Activated CD4-positive, alpha-beta T cell treated with anti-CD3 and anti-CD28 coated beads for 36 hours (primary cell): ENCODE measurements at regions of chr2 and their contacts with region 1.

Region 1: GRCh38 chr2:24971536-24972314 is at the start of gene DNAJC27:
- DNase-seq: peak; percentile 99
- ATAC-seq: peak; percentile 91
- H3K4me3 Mint-ChIP-seq: peak within 1 kb of the TSS; percentile 86
- H3K27ac Mint-ChIP-seq: peak within 1 kb of the TSS; percentile 99
- H3K4me1 Mint-ChIP-seq: peaks cover 17% of the 10 kb centered on the region
- H3K27me3 Mint-ChIP-seq: no peaks in the 10 kb centered on the region
- total RNA-seq, gene DNAJC27: 5.9 to 6.6 TPM

Region 2: DNA sequence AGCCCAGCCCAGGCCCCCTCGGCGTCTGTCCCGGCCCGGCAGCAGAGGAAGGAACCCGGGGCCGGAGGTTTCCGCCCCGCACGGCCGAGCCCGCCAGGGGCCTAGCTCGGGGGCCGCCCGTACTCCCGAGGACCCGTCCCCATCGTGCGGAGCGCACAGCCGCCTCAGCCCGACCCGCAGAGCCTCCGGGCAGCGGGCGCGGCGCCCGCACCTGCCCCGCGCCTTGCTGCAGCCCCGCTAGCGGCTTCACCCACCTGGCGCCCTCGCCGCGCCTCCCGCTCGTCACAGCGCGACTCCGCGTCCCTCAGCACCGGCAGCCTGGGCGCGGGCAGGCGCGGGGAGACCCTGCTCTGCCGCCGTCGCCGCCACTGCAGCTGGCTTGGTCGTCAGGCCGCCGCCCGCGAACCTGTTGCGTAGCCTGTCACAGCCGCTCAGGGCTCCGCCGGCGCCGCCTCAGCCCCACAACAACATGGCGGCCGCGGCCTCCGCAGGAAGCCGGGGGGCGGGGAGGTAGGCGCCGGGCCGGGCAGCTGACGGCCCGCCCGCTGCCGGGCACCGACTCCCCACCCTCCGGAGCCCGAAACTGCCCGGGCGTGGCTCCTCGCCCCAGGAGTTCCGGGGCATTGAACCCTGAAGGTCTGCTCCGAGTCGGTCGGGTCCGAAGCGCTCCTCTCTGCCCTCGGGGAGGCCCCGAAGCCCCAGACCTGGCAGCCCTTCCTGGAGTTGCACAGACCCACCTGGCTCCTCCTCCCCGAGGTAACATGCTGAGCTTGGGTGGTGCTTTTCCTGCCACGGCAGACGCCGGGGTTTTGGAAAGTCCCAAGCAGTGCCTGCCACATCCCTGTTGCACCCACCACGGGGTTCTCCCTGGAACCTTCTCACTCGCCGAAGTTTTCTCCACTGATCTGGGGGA is 611.4 kb before region 1 on chr2 and contains the start of gene ITSN2:
- CTCF ChIA-PET with region 1: no interaction called
- POLR2A ChIA-PET with region 1: no interaction called
- intact Hi-C with region 1: loop called in 1 of 2 experiments (anchors 1 kb)
- DNase-seq: peak; percentile 90
- ATAC-seq: peak; percentile 89
- H3K4me3 Mint-ChIP-seq: peak within 1 kb of the TSS; percentile 84
- H3K27ac Mint-ChIP-seq: peak within 1 kb of the TSS; percentile 94
- H3K4me1 Mint-ChIP-seq: peaks cover 29% of the 10 kb centered on the region
- H3K27me3 Mint-ChIP-seq: no peaks in the 10 kb centered on the region
- total RNA-seq, gene ITSN2: 46.0 to 49.6 TPM

Region 3: GRCh38 chr2:24855726-24856125 is 116.0 kb before region 1 on chr2:
- CTCF ChIA-PET with region 1: no interaction called
- POLR2A ChIA-PET with region 1: no interaction called
- intact Hi-C with region 1: no loop called
- DNase-seq: no peak
- ATAC-seq: no peak
- H3K4me3 Mint-ChIP-seq: no peak overlapping the region
- H3K27ac Mint-ChIP-seq: no peak overlapping the region
- H3K4me1 Mint-ChIP-seq: no peaks in the 10 kb centered on the region
- H3K27me3 Mint-ChIP-seq: no peaks in the 10 kb centered on the region

Region 4: GRCh38 chr2:24920098-24920808 is 51.5 kb before region 1 on chr2 and contains the start of gene ADCY3:
- CTCF ChIA-PET with region 1: interaction called, 3 read pairs
- POLR2A ChIA-PET with region 1: no interaction called
- intact Hi-C with region 1: loop called (anchors 1 to 2 kb)
- DNase-seq: peak; percentile 79
- ATAC-seq: peak; percentile 59
- H3K4me3 Mint-ChIP-seq: peak within 1 kb of the TSS; percentile 83
- H3K27ac Mint-ChIP-seq: peak within 1 kb of the TSS; percentile 90
- H3K4me1 Mint-ChIP-seq: peaks cover 33% of the 10 kb centered on the region
- H3K27me3 Mint-ChIP-seq: peaks cover 1% of the 10 kb centered on the region
- total RNA-seq, gene ADCY3: 59.5 to 92.8 TPM

Region 5: DNA sequence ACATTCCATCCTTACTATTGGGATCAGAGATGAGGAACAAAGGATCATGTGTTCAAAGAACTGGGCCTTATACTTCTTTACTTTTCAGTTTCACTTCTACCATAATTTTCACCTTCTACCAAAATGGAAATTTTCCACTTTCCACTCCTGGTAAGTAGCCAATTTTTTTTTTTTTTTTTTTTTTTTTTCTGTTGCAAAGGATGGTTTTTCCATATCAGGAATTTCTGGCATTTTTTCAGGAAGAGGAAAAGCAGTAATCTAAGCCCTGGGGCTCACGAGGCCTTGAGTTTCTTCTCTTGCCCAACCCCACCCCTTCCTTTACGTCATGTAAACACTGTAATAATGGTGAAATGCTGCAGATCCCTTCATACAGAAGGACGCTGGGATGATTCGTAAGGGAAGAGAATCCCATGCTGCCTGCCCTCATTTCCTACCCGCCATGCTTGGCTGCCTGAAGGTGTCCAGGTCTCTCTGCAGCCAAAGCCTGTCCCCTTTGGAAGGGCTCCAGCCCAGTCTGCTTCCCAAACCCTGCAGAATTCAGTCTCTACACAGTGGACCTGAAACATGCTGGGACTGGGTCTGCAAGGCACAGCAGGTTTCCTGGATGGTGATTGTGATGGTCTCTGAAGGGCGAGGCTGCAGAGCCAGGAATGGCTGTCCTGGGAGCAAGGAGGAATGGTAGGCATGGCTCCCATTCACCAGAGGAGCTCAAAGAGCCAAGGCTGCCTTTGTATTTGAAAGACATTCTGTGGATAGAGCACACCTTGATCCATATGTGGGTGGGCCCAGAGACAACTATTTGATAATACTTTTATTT is 127.2 kb after region 1 on chr2:
- CTCF ChIA-PET with region 1: interaction called, 8 read pairs
- POLR2A ChIA-PET with region 1: no interaction called
- intact Hi-C with region 1: loop called (anchors 1 kb)
- DNase-seq: no peak
- ATAC-seq: no peak
- H3K4me3 Mint-ChIP-seq: no peak overlapping the region
- H3K27ac Mint-ChIP-seq: no peak overlapping the region
- H3K4me1 Mint-ChIP-seq: peaks cover 18% of the 10 kb centered on the region
- H3K27me3 Mint-ChIP-seq: peaks cover 2% of the 10 kb centered on the region

Region 6: GRCh38 chr2:25215948-25216679 is 244.4 kb after region 1 on chr2:
- CTCF ChIA-PET with region 1: interaction called, 3 read pairs
- POLR2A ChIA-PET with region 1: no interaction called
- intact Hi-C with region 1: loop called in 1 of 2 experiments (anchors 5 kb)
- DNase-seq: peak; percentile 88
- ATAC-seq: peak; percentile 93
- H3K4me3 Mint-ChIP-seq: peak overlapping the region; percentile 65
- H3K27ac Mint-ChIP-seq: peak overlapping the region; percentile 71
- H3K4me1 Mint-ChIP-seq: peaks cover 9% of the 10 kb centered on the region
- H3K27me3 Mint-ChIP-seq: no peaks in the 10 kb centered on the region

Region 7: DNA sequence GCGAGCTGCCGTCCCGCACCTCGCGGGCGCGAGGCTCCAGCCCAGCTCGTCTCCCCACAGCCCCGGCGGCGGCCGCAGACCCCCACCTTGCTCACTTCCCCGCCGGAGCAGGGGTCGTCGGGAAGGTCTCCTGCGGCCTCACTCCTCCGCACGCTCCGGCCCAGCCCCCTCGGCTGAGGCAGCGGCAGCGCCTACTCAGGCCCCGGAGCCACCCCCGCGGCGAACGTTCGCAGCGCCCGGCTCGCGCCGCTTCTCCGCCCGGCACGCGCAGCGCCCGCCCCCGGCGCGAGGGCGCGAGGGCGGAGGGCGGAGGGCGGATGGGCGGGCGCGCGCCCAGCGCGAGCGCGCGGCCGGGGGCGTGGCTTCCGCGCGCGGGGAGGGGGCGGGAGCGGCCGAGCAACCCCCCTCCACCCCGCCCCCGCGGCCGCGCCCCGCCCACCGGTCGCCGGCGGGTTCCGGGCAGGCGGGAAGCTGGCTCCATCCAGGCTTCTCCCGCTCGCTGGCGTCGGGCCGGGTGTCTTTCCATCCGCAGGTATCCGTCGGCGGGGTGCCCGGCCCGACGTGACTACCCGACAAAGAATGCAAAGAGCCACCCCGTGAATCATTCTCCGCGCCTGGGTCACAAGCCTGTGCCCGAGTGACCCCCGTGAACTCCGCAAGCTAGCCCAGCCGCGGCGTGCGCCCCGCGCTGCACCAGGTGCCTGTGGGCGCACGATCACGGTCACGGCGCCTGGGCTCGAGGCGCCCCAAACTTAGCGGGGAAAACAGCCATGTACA is 701.8 kb after region 1 on chr2 and contains the start of gene DTNB:
- CTCF ChIA-PET with region 1: no interaction called
- POLR2A ChIA-PET with region 1: no interaction called
- intact Hi-C with region 1: loop called in 1 of 2 experiments (anchors 1 kb)
- DNase-seq: peak; percentile 86
- ATAC-seq: peak; percentile 74
- H3K4me3 Mint-ChIP-seq: peak within 1 kb of the TSS; percentile 79
- H3K27ac Mint-ChIP-seq: peak within 1 kb of the TSS; percentile 76
- H3K4me1 Mint-ChIP-seq: peaks cover 31% of the 10 kb centered on the region
- H3K27me3 Mint-ChIP-seq: peaks cover 11% of the 10 kb centered on the region
- total RNA-seq, gene DTNB: 17.1 to 33.5 TPM